ENCODE measurements at regions of chr5 and their contacts with region 1.

Region 1: DNA sequence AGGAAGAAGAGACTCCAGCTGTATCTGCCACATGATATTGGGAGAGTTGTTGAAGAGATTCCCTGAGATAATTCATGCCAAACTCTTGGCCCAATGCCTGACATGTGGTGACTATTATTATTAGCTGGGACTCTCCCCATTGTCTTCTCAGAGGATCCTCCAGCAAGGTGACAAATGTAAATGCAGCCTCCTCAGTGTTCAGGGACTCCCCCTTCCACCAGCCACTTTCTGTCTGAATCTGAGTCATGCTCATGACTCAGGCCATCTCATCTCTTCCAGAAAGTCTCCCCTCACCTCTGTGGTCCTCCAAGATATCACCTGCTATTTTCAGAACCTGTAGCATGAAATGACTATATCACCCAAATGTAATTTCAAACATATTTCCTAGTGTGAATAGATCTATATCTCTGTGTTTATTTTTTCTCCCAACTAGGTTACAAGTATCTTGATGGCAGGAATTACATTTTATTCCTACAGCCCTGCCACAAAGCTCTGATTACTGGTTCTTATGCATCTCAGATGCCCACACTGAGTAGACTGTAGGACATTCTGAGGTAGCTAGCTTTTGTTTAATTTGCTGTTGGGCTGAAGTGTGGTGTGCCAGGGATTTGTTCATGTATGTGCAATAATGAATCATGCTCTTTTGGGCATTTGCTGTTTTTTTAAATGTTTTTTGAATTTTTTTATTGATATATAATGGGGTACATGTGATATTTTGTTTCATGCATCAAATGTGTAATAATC is 126.6 kb upstream of the IL12B start:
- DNase-seq: peak; percentile 82
- H3K4me3 Mint-ChIP-seq: peak overlapping the region; percentile 15
- H3K27ac Mint-ChIP-seq: peak overlapping the region; percentile 81
- H3K4me1 Mint-ChIP-seq: peaks cover 43% of the 10 kb centered on the region
- H3K27me3 Mint-ChIP-seq: peaks cover 61% of the 10 kb centered on the region

Region 2: DNA sequence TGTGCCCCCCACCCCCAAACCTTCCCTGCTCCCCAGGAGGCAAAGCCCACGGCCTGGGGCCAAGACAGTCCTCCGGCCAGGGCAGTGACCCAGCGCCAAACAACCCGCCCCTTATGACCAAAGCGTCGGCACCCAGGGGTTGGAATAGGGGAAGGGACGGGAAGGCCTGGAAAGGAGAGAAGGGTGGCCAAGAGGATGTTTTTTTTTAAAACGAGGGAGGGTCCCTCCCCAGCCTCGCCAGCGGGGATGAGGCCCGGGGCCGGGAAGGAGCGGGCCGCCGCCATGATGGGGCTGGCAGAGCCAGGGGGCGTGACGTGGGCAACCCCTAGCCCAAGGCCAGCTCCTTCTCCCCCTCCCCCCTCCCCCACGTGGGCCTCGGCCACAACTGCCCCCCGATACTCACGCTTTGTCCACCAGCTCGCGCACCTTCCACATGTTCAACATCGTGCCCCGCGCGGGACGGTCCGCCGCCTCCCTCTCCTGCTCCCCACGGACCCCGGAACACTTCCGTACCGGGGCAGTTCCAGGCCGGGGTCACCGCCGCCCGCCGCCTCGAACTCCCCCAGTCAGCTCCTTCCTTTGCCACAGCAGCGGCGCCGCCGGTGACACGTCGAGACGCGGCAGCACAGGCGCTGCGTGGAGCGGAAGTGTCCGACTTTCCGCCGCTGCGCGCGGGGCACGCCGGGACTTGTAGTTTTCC is 1598.2 kb before region 1 on chr5 and contains the start of gene CLINT1:
- intact Hi-C with region 1: loop called (anchors 2 kb)
- DNase-seq: peak; percentile 97
- H3K4me3 Mint-ChIP-seq: peak within 1 kb of the TSS; percentile 99
- H3K27ac Mint-ChIP-seq: peak within 1 kb of the TSS; percentile 100
- H3K4me1 Mint-ChIP-seq: peaks cover 55% of the 10 kb centered on the region
- H3K27me3 Mint-ChIP-seq: no peaks in the 10 kb centered on the region
- total RNA-seq, gene CLINT1: 91.9 and 92.1 TPM in 2 replicates

Region 3: DNA sequence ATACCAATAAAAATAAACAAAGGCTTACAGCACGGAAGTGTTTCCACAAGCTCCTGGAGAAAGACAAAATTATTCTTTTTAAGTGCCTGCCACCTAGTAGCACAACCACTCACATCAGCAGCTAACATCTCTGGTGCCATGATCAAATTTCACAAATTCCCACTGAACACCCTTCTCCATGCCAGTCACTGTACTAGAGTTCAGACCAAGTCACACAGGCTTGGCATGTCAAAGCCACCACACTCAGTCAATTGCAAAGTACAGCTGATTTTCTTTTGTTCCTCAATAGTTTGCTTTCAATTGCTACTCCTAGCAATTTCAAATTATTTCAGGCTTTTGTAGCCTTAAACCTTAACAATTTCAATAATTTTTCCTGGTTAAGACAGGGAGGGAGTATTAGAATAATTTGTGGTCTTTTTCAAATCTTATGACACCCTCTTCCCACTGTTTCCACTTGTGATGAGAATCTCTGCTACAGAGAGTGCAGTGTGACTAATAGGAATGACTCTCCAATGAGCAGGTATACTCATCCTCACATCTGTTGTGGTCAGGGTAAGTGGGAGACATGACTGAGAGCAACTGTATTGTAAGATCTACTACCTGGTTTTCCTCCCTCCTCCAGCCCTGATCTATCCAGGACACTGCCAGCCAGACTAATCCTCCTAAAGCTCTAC is 293.7 kb before region 1 on chr5:
- intact Hi-C with region 1: loop called (anchors 2 kb)
- DNase-seq: no peak
- H3K4me3 Mint-ChIP-seq: peak overlapping the region; percentile 6
- H3K27ac Mint-ChIP-seq: peak overlapping the region; percentile 74
- H3K4me1 Mint-ChIP-seq: peaks cover 43% of the 10 kb centered on the region
- H3K27me3 Mint-ChIP-seq: no peaks in the 10 kb centered on the region

Region 4: DNA sequence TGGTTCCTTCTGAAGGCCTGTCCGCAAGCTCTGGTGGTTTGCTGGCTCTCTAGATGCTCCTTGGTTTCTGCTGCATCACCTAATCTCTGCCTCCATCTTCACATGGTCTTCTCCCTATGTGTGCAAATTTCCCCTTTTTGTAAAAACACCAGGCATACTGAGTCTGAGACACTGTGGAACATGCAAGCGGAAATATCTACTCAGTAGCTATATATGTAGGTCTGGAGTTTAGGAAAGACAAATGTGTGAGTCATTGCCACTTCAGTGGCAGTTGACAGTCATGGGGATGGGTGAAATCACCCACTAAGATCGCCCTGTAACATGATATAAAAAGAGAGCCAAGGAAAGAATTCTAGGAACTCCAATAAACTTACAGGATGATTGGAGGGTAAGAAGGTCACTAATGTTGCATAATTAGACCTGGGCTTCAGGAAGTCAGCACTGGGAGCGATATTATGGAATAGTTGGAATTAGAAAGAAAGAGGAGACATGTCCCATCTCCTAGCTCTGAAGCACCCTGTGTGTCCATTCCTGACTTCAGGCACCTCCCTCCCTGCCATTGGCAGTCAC is 216.5 kb before region 1 on chr5:
- intact Hi-C with region 1: loop called (anchors 1 kb)
- DNase-seq: no peak
- H3K4me3 Mint-ChIP-seq: no peak overlapping the region
- H3K27ac Mint-ChIP-seq: peak overlapping the region; percentile 59
- H3K4me1 Mint-ChIP-seq: peaks cover 20% of the 10 kb centered on the region
- H3K27me3 Mint-ChIP-seq: no peaks in the 10 kb centered on the region

Region 5: DNA sequence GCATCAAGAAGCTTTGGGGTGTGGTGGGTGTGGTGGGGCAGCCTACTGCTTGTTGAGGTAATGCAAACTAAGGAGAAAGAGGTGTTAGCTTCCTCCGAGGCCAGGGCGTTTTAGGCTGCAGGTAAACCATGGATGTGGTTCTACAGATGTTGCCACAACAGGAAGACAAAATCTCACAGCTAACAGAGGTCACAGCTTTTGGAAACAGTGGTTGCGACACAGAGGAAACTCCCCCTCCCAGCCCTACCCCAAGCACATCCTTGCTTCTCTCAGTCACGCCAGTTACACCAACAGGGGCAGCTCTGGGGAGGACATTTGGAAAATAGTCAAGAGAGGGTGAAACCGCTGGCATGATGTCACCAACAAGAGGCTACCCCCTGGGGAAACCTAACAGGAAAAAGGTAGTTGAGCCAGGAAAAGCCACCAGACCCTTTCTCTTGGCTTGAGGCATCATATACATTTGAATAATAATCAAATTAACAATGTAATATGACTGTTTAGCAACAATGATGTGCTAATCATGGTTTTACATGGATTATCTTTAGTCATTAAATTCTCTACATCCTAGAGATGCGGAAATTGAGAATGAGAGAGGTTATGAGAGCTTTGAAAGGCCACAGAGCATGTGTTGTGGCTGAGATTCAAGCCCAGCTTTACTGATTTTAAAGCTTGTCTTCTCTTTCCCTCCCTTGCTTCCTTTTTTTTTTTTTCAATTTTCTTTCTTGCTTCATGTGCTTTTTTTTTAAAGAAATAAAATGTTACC is 44.4 kb before region 1 on chr5:
- intact Hi-C with region 1: loop called (anchors 1 kb)
- DNase-seq: peak; percentile 94
- H3K4me3 Mint-ChIP-seq: peak overlapping the region; percentile 46
- H3K27ac Mint-ChIP-seq: peak overlapping the region; percentile 82
- H3K4me1 Mint-ChIP-seq: peaks cover 58% of the 10 kb centered on the region
- H3K27me3 Mint-ChIP-seq: peaks cover 12% of the 10 kb centered on the region

Region 6: GRCh38 chr5:159593518-159594073 is 136.7 kb after region 1 on chr5:
- intact Hi-C with region 1: no loop called
- DNase-seq: no peak
- H3K4me3 Mint-ChIP-seq: no peak overlapping the region
- H3K27ac Mint-ChIP-seq: no peak overlapping the region
- H3K4me1 Mint-ChIP-seq: no peaks in the 10 kb centered on the region
- H3K27me3 Mint-ChIP-seq: no peaks in the 10 kb centered on the region

Region 7: GRCh38 chr5:160008877-160009590 is 552.1 kb after region 1 on chr5 and contains the start of gene TTC1:
- intact Hi-C with region 1: loop called (anchors 2 kb)
- DNase-seq: peak; percentile 97
- H3K4me3 Mint-ChIP-seq: peak within 1 kb of the TSS; percentile 97
- H3K27ac Mint-ChIP-seq: peak within 1 kb of the TSS; percentile 99
- H3K4me1 Mint-ChIP-seq: peaks cover 25% of the 10 kb centered on the region
- H3K27me3 Mint-ChIP-seq: peaks cover 2% of the 10 kb centered on the region
- total RNA-seq, gene TTC1: 64.8 and 68.0 TPM in 2 replicates